Activated T-helper 2 cell treated with anti-CD3 and anti-CD28 coated beads, Interferon-gamma antibody, Interleukin-2, Interleukin-4, amounts not matched to agents 10 μg/mL and 5 μg/mL and 100 μg/mL, durations not matched to agents 14 hours and 24 hours and 36 hours (primary cell): ENCODE measurements at regions of chr2 and their contacts with region 1.

Region 1: GRCh38 chr2:176001916-176002687 is at the start of gene LNPK:
- DNase-seq: peak; percentile 91
- H3K4me3 Mint-ChIP-seq: peak within 1 kb of the TSS; percentile 91
- H3K27ac Mint-ChIP-seq: peak within 1 kb of the TSS; percentile 89
- H3K4me1 Mint-ChIP-seq: peaks cover 22% of the 10 kb centered on the region
- H3K27me3 Mint-ChIP-seq: peaks cover 7% of the 10 kb centered on the region
- total RNA-seq, gene LNPK: 50.3 and 51.9 TPM in 2 replicates

Region 2: GRCh38 chr2:175742367-175742766 is 259.7 kb before region 1 on chr2:
- intact Hi-C with region 1: loop called (anchors 5 kb)
- DNase-seq: no peak
- H3K4me3 Mint-ChIP-seq: no peak overlapping the region
- H3K27ac Mint-ChIP-seq: no peak overlapping the region
- H3K4me1 Mint-ChIP-seq: peaks cover 3% of the 10 kb centered on the region
- H3K27me3 Mint-ChIP-seq: peaks cover 6% of the 10 kb centered on the region

Region 3: GRCh38 chr2:175941699-175942098 is 60.4 kb before region 1 on chr2:
- intact Hi-C with region 1: loop called (anchors 5 kb)
- DNase-seq: no peak
- H3K4me3 Mint-ChIP-seq: no peak overlapping the region
- H3K27ac Mint-ChIP-seq: no peak overlapping the region
- H3K4me1 Mint-ChIP-seq: peaks cover 2% of the 10 kb centered on the region
- H3K27me3 Mint-ChIP-seq: no peaks in the 10 kb centered on the region

Region 4: GRCh38 chr2:176024083-176024482 is 22.0 kb after region 1 on chr2:
- intact Hi-C with region 1: no loop called
- DNase-seq: no peak
- H3K4me3 Mint-ChIP-seq: no peak overlapping the region
- H3K27ac Mint-ChIP-seq: no peak overlapping the region
- H3K4me1 Mint-ChIP-seq: no peaks in the 10 kb centered on the region
- H3K27me3 Mint-ChIP-seq: peaks cover 29% of the 10 kb centered on the region